Thyroid gland (tissue), 4 donors: ENCODE measurements at regions of chr14 and their contacts with region 1.

Region 1: GRCh38 chr14:52703225-52703624 is 3.8 kb upstream of the PSMC6 start:
- DNase-seq: no peak
- H3K4me3 ChIP-seq: no peak overlapping the region
- H3K27ac ChIP-seq: no peak overlapping the region
- H3K4me1 ChIP-seq: peaks cover 7 to 11% of the 10 kb centered on the region in 2 donors
- H3K27me3 ChIP-seq: no peaks in the 10 kb centered on the region
- CTCF ChIP-seq: no peak
- POLR2A ChIP-seq: no peak

Region 2: DNA sequence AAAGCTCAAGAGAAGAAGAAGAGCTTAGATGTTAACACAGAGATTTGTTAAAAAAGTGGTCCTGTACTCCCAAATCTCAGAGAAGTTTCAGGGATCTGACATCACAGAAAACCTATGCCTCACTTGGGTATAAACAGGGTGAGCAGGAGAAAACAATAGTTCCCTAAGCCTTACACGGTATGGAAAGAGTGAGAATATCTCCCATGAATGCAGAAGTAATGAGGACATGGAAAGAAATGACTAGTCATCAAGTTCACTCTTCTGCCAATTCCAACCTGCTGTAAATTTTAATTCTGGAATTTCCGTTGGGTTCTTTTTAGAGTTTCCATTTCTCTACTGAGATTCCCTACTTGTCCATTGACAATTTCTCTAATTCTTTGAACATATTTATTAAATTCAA is 395.3 kb before region 1 on chr14:
- intact Hi-C with region 1: no loop called
- DNase-seq: no peak
- H3K4me3 ChIP-seq: no peak overlapping the region
- H3K27ac ChIP-seq: no peak overlapping the region
- H3K4me1 ChIP-seq: peaks cover 0 to 2% of the 10 kb centered on the region in 2 donors
- H3K27me3 ChIP-seq: peaks cover 5% of the 10 kb centered on the region
- CTCF ChIP-seq: no peak
- POLR2A ChIP-seq: no peak

Region 3: GRCh38 chr14:52552063-52552988 is 150.9 kb before region 1 on chr14 and contains the starts of genes GPR137C and TXNDC16:
- intact Hi-C with region 1: loop called (anchors 5 kb)
- DNase-seq: peak; percentile 100
- H3K4me3 ChIP-seq: peak within 1 kb of the TSS; percentile 31 to 87 (median 57)
- H3K27ac ChIP-seq: peak within 1 kb of the TSS; percentile 71 to 93 (median 90)
- H3K4me1 ChIP-seq: peaks cover 8 to 10% of the 10 kb centered on the region in 2 donors
- H3K27me3 ChIP-seq: no peaks in the 10 kb centered on the region
- CTCF ChIP-seq: no peak
- POLR2A ChIP-seq: peak; percentile 84 to 100
- total RNA-seq, gene GPR137C: 0.20 to 1.4 (median 1.1) TPM
- total RNA-seq, gene TXNDC16: 3.7 to 14.1 (median 7.4) TPM